ENCODE measurements at regions of chr3 and their contacts with region 1.

Region 1: DNA sequence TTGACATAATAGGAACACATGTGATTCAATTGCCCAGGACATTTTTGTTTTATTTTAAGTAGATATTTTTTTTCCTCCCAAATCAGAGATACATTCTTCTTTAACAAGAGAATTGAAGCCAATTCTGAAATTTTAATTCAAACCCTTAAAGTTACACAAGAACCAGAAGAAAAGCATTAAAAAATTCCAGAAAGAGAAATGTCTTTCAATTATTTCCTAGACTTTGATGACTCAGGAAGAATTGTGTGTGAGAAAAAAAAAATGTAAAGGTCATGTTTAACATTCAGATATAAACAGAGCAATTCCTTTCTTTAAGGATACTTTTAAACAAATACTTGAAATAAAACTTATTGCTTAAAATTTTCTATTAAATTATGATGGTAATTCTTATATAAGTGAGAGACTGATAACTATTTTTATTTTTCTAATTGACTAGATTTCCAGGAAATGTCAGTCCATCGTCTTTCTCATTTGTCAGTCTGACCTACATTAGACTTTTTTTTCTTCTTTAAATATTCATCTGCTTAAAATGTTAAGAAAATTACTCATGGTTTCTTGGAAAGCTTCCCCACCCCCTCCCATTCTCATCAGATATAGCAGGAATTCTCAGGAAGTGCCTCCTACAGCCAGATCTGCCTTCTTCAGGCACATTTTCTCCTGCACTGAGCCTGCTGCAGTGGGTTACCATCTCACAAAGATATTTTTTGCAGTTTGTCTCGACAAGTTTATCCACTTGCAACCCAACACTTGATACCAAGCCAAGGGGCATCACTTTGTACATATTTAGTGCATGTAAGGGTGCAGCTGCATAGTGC is 261.8 kb upstream of the CBLB start:
- DNase-seq: no peak
- ATAC-seq: no peak
- H3K4me3 ChIP-seq: no peak overlapping the region
- H3K4me3 Mint-ChIP-seq: no peak overlapping the region
- H3K27ac ChIP-seq: no peak overlapping the region
- H3K27ac Mint-ChIP-seq: no peak overlapping the region
- H3K4me1 ChIP-seq: no peaks in the 10 kb centered on the region
- H3K4me1 Mint-ChIP-seq: peaks cover 2% of the 10 kb centered on the region
- H3K27me3 ChIP-seq: no peaks in the 10 kb centered on the region
- H3K27me3 Mint-ChIP-seq: no peaks in the 10 kb centered on the region
- CTCF ChIP-seq: no peak

Region 2: GRCh38 chr3:106083207-106083606 is 47.4 kb before region 1 on chr3:
- CTCF ChIA-PET with region 1: no interaction called
- POLR2A ChIA-PET with region 1: no interaction called
- intact Hi-C with region 1: loop called in 1 of 2 experiments (anchors 5 kb)
- DNase-seq: no peak
- ATAC-seq: no peak
- H3K4me3 ChIP-seq: no peak overlapping the region
- H3K4me3 Mint-ChIP-seq: no peak overlapping the region
- H3K27ac ChIP-seq: no peak overlapping the region
- H3K27ac Mint-ChIP-seq: no peak overlapping the region
- H3K4me1 ChIP-seq: no peaks in the 10 kb centered on the region
- H3K4me1 Mint-ChIP-seq: peaks cover 6% of the 10 kb centered on the region
- H3K27me3 ChIP-seq: no peaks in the 10 kb centered on the region
- H3K27me3 Mint-ChIP-seq: no peaks in the 10 kb centered on the region
- CTCF ChIP-seq: no peak

Region 3: DNA sequence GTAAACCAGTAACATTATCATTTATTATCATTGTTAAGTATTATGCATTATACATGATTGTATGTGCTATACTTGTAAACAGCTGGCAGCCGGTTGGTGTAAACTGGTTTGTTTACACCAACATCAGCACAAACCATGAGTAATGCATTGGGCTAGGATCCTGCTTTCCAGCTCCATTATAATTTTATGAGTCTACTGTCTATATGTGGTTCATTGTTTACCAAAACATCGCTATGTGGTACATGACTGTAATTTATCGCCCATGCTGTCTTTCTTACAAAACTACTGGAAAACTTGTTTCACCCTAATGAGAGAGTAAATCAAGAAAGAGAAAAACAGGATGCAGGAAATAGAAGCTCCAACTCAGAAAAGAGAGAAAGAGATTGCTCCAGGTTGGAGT is 37.0 kb before region 1 on chr3:
- CTCF ChIA-PET with region 1: no interaction called
- POLR2A ChIA-PET with region 1: no interaction called
- intact Hi-C with region 1: no loop called
- DNase-seq: no peak
- ATAC-seq: no peak
- H3K4me3 ChIP-seq: no peak overlapping the region
- H3K4me3 Mint-ChIP-seq: no peak overlapping the region
- H3K27ac ChIP-seq: no peak overlapping the region
- H3K27ac Mint-ChIP-seq: no peak overlapping the region
- H3K4me1 ChIP-seq: no peaks in the 10 kb centered on the region
- H3K4me1 Mint-ChIP-seq: no peaks in the 10 kb centered on the region
- H3K27me3 ChIP-seq: no peaks in the 10 kb centered on the region
- H3K27me3 Mint-ChIP-seq: no peaks in the 10 kb centered on the region
- CTCF ChIP-seq: no peak

Region 4: DNA sequence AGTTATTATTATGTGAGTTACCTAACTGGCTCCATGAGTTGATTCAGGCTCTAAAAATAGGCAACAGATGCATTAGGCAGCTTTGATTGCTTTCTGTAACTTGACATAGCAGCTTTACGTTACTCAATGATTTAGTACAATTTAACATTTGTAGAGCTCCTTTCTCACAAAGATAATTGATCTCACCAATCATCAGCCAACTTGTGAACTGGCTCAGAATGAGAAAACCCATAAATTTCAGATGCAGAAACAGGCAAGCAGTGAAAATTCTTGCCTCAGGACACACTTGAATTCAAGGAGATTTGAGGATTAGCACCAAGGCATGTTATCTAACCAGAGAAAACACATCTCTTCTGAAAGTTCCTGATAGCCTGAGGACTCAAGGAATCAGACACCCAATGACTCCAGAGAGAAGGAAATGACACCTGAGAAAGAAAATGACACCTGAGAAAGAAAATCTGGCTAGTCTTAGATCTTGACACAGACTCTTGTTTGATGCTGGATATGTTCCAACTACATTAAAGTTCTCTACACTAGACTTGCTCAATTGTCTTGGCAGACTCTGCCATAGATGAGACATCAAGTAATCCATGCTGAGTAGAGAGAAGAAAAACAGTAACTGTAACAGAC is 53.3 kb after region 1 on chr3:
- CTCF ChIA-PET with region 1: no interaction called
- POLR2A ChIA-PET with region 1: no interaction called
- intact Hi-C with region 1: loop called in 1 of 2 experiments (anchors 10 kb)
- DNase-seq: peak in 2 of 9 experiments; percentile 15 to 40
- ATAC-seq: peak; percentile 66
- H3K4me3 ChIP-seq: no peak overlapping the region
- H3K4me3 Mint-ChIP-seq: no peak overlapping the region
- H3K27ac ChIP-seq: peak overlapping the region in 1 of 2 experiments; percentile 36
- H3K27ac Mint-ChIP-seq: peak overlapping the region; percentile 9
- H3K4me1 ChIP-seq: peaks cover 26% of the 10 kb centered on the region
- H3K4me1 Mint-ChIP-seq: peaks cover 35% of the 10 kb centered on the region
- H3K27me3 ChIP-seq: no peaks in the 10 kb centered on the region
- H3K27me3 Mint-ChIP-seq: no peaks in the 10 kb centered on the region
- CTCF ChIP-seq: no peak

Measured in CD8-positive, alpha-beta T cell (primary cell).